ENCODE measurements at regions of chr4 and their contacts with region 1.

Region 1: GRCh38 chr4:153634738-153635353 is 49.2 kb upstream of the TLR2 start:
- DNase-seq: no peak
- H3K4me3 ChIP-seq: no peak overlapping the region
- H3K27ac ChIP-seq: no peak overlapping the region
- H3K4me1 ChIP-seq: no peaks in the 10 kb centered on the region
- H3K27me3 ChIP-seq: no peaks in the 10 kb centered on the region
- CTCF ChIP-seq: peak; percentile 69

Region 2: GRCh38 chr4:153318696-153319320 is 316.0 kb before region 1 on chr4:
- intact Hi-C with region 1: no loop called
- DNase-seq: no peak
- H3K4me3 ChIP-seq: no peak overlapping the region
- H3K27ac ChIP-seq: no peak overlapping the region
- H3K4me1 ChIP-seq: no peaks in the 10 kb centered on the region
- H3K27me3 ChIP-seq: no peaks in the 10 kb centered on the region
- CTCF ChIP-seq: peak; percentile 78

Region 3: GRCh38 chr4:153750197-153750817 is 115.5 kb after region 1 on chr4:
- intact Hi-C with region 1: loop called (anchors 5 kb)
- DNase-seq: no peak
- H3K4me3 ChIP-seq: no peak overlapping the region
- H3K27ac ChIP-seq: no peak overlapping the region
- H3K4me1 ChIP-seq: no peaks in the 10 kb centered on the region
- H3K27me3 ChIP-seq: peaks cover 16% of the 10 kb centered on the region
- CTCF ChIP-seq: peak; percentile 71

Region 4: GRCh38 chr4:153791746-153792617 is 157.1 kb after region 1 on chr4:
- intact Hi-C with region 1: no loop called
- DNase-seq: no peak
- H3K4me3 ChIP-seq: peak overlapping the region; percentile 51
- H3K27ac ChIP-seq: no peak overlapping the region
- H3K4me1 ChIP-seq: peaks cover 36% of the 10 kb centered on the region
- H3K27me3 ChIP-seq: peaks cover 98% of the 10 kb centered on the region
- CTCF ChIP-seq: peak; percentile 37

Measured in left ventricle myocardium inferior (tissue), 1 donor.